B cell (primary cell): ENCODE measurements at regions of chr1 and their contacts with region 1.

Region 1: DNA sequence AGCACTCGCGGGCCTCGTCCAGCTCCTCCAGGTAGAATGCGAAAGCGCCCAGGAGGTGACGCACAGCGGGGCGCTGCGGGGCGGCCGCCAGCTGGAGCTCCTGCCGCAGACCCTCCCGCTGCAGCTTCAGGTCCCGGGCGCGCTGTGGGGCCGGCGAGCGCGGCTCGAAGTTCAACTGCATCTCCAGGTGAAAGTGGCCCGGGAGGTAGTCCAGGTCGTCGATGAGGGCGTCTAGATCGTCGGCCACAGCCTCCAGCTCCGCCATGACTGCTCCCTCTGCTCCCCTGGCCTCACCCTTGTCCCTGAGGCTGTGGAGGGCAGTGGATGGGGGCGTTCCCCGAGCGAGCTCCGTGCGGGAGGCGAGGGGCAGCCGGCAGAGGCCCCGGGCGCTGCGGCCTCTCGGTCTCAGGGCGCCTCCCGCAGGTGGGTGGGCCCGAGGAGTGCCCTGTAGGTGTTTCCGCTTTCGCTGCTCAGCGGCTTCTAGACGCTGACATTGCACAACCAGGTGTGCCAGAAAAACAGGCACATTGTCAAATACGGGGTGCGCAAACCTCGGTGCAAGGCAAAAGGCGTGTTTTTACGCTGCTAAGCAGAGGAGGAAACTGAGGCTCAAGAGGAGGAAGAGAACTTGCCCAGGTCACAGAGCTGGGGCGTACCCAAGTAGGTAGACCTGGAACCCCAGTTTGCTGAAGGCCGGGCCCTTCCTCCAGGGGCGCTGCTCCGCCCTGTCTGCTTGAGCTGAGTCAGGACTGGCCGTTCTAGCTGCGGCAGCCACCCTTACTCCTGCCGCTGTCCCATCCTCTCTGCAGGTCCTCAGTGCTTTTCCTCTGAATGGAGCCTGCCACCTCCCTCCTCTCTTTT is at the start of gene TTC22:
- DNase-seq: peak; percentile 81
- ATAC-seq: peak; percentile 92
- H3K4me3 ChIP-seq: peak within 1 kb of the TSS; percentile 50 to 82 (median 75)
- H3K4me3 Mint-ChIP-seq: peak within 1 kb of the TSS; percentile 99
- H3K27ac ChIP-seq: peak within 1 kb of the TSS in 1 of 2 donors; percentile 55
- H3K27ac Mint-ChIP-seq: peak within 1 kb of the TSS; percentile 93
- H3K4me1 ChIP-seq: peaks cover 25 to 31% of the 10 kb centered on the region in 2 donors
- H3K4me1 Mint-ChIP-seq: peaks cover 32% of the 10 kb centered on the region
- H3K27me3 ChIP-seq: no peaks in the 10 kb centered on the region
- H3K27me3 Mint-ChIP-seq: no peaks in the 10 kb centered on the region
- CTCF ChIP-seq: peak; percentile 81
- total RNA-seq, gene TTC22: 10.4 and 10.9 TPM in 2 replicates

Region 2: GRCh38 chr1:54016313-54017262 is 784.5 kb before region 1 on chr1:
- CTCF ChIA-PET with region 1: no interaction called
- POLR2A ChIA-PET with region 1: no interaction called
- intact Hi-C with region 1: no loop called
- DNase-seq: no peak
- ATAC-seq: no peak
- H3K4me3 ChIP-seq: no peak overlapping the region
- H3K4me3 Mint-ChIP-seq: no peak overlapping the region
- H3K27ac ChIP-seq: no peak overlapping the region
- H3K27ac Mint-ChIP-seq: no peak overlapping the region
- H3K4me1 ChIP-seq: no peaks in the 10 kb centered on the region
- H3K4me1 Mint-ChIP-seq: no peaks in the 10 kb centered on the region
- H3K27me3 ChIP-seq: peaks cover 0 to 3% (median 0%) of the 10 kb centered on the region in 4 experiments
- H3K27me3 Mint-ChIP-seq: peaks cover 19% of the 10 kb centered on the region
- CTCF ChIP-seq: no peak

Region 3: GRCh38 chr1:54347955-54348699 is 453.0 kb before region 1 on chr1:
- CTCF ChIA-PET with region 1: no interaction called
- POLR2A ChIA-PET with region 1: no interaction called
- intact Hi-C with region 1: no loop called
- DNase-seq: no peak
- ATAC-seq: no peak
- H3K4me3 ChIP-seq: no peak overlapping the region
- H3K4me3 Mint-ChIP-seq: no peak overlapping the region
- H3K27ac ChIP-seq: no peak overlapping the region
- H3K27ac Mint-ChIP-seq: no peak overlapping the region
- H3K4me1 ChIP-seq: no peaks in the 10 kb centered on the region
- H3K4me1 Mint-ChIP-seq: no peaks in the 10 kb centered on the region
- H3K27me3 ChIP-seq: no peaks in the 10 kb centered on the region
- H3K27me3 Mint-ChIP-seq: no peaks in the 10 kb centered on the region
- CTCF ChIP-seq: no peak

Region 4: GRCh38 chr1:54715493-54716298 is 85.4 kb before region 1 on chr1 and contains the start of gene TTC4:
- CTCF ChIA-PET with region 1: interaction called, 5 read pairs
- POLR2A ChIA-PET with region 1: interaction called, 3 read pairs
- intact Hi-C with region 1: loop called (anchors 2 kb)
- DNase-seq: peak; percentile 91
- ATAC-seq: peak; percentile 99
- H3K4me3 ChIP-seq: peak within 1 kb of the TSS; percentile 81 to 92 (median 91)
- H3K4me3 Mint-ChIP-seq: peak within 1 kb of the TSS; percentile 87
- H3K27ac ChIP-seq: peak within 1 kb of the TSS; percentile 50 to 71
- H3K27ac Mint-ChIP-seq: peak within 1 kb of the TSS; percentile 83
- H3K4me1 ChIP-seq: peaks cover 16 to 17% of the 10 kb centered on the region in 2 donors
- H3K4me1 Mint-ChIP-seq: peaks cover 26% of the 10 kb centered on the region
- H3K27me3 ChIP-seq: no peaks in the 10 kb centered on the region
- H3K27me3 Mint-ChIP-seq: no peaks in the 10 kb centered on the region
- CTCF ChIP-seq: no peak
- total RNA-seq, gene TTC4: 19.9 and 23.9 TPM in 2 replicates